K562 (cell line): ENCODE measurements at regions of chr9 and their contacts with region 1.

Region 1: GRCh38 chr9:104780799-104781395 is 17.0 kb downstream of the NIPSNAP3B start:
- DNase-seq: peak in 1 of 4 experiments; percentile 41
- ATAC-seq: peak; percentile 74
- H3K4me3 ChIP-seq: no peak overlapping the region
- H3K27ac ChIP-seq: no peak overlapping the region
- H3K4me1 ChIP-seq: peaks cover 3% of the 10 kb centered on the region in 2 experiments; a peak in 4 of 5 replicates
- H3K27me3 ChIP-seq: peaks cover 3 to 10% of the 10 kb centered on the region in 2 experiments; a peak in 3 of 5 replicates
- CTCF ChIP-seq: peak; percentile 15 to 72 (median 29); a peak in 3 of 6 replicates
- EP300 ChIP-seq: no peak
- POLR2A ChIP-seq: no peak
- RAD21 ChIP-seq: peak; percentile 76 to 82

Region 2: GRCh38 chr9:104682642-104683041 is 98.3 kb before region 1 on chr9:
- CTCF ChIA-PET with region 1: no interaction called
- POLR2A ChIA-PET with region 1: no interaction called
- in situ Hi-C with region 1: no loop called
- intact Hi-C with region 1: no loop called
- DNase-seq: peak; percentile 13 to 64 (median 18)
- ATAC-seq: peak; percentile 85
- H3K4me3 ChIP-seq: no peak overlapping the region
- H3K27ac ChIP-seq: no peak overlapping the region
- H3K4me1 ChIP-seq: no peaks in the 10 kb centered on the region
- H3K27me3 ChIP-seq: no peaks in the 10 kb centered on the region
- CTCF ChIP-seq: peak; percentile 27 to 65 (median 44); a peak in 4 of 6 replicates
- EP300 ChIP-seq: no peak
- POLR2A ChIP-seq: no peak
- RAD21 ChIP-seq: peak; percentile 77 to 86

Region 3: DNA sequence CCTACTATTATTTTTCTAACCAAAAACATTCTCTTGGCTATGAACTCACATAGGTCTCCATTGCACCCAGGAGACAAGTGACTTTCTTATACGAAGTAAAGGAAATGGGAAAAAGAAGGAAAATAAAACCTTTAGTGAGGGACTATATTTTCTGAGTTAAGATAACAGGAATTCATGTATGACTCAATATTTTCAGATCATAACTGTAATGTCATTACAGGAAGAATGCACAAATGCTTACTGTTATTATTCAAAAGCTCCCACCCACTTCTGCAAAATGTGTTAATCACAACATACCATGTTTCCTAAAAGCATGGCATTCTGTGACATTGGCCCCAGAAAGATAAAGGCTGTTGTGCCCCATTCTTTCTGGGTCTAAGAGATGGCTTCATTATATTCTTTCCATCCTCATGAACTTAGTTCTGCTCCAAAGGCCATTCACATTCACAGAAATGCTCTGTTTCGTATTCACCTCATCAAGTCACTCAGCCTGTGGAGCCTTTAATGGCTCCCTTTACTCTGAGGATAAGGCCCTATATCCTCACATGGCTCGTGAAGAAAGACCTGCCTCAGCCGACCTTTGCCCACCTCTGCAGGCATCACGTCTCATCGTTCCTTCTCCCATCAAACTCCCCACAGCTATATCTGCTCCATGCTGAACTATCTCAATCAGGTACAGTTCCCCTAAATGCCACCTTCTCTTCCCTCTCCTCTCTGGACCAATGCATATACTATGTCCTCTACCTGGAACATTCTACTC is 70.1 kb after region 1 on chr9:
- CTCF ChIA-PET with region 1: no interaction called
- POLR2A ChIA-PET with region 1: no interaction called
- in situ Hi-C with region 1: no loop called
- intact Hi-C with region 1: no loop called
- DNase-seq: no peak
- ATAC-seq: no peak
- H3K4me3 ChIP-seq: no peak overlapping the region
- H3K27ac ChIP-seq: no peak overlapping the region
- H3K4me1 ChIP-seq: no peaks in the 10 kb centered on the region
- H3K27me3 ChIP-seq: peaks cover 4 to 14% of the 10 kb centered on the region in 2 experiments; a peak in 3 of 5 replicates
- CTCF ChIP-seq: no peak
- EP300 ChIP-seq: no peak
- POLR2A ChIP-seq: no peak
- RAD21 ChIP-seq: no peak

Region 4: DNA sequence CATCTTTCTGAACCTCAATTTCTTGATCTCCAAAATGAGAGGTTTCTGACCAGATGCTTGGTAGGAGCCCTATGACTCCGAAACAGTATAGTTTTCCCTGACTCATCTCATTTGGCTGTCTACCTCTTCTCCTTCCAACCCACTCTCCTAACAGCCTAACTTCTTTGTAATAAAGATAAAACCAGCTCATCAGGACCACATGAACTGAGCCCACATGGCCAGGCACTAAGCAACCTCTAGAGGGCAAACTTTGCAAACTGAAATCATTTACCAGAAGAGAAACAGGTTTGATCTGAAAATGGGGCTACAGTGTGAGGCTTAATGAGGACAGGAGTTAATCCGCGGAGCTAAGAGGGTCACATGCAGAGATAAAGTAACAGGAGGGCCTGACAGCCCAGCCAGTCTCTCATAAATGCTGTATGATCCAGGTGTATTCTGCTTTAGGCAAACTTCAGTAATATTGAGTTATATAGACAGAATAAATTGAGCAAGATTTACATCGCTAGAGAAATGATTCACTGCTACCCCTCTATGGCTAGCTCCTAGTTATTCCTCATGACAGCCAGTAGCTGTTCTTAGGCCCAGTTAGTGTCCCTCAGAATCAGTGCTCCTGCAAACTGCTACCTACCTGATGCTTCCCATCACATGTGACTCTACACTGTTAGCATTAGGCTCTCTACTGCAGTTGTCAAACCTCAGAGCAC is 82.4 kb after region 1 on chr9:
- CTCF ChIA-PET with region 1: no interaction called
- POLR2A ChIA-PET with region 1: no interaction called
- in situ Hi-C with region 1: no loop called
- intact Hi-C with region 1: loop called (anchors 2 kb)
- DNase-seq: peak; percentile 39 to 70 (median 50)
- ATAC-seq: peak; percentile 96
- H3K4me3 ChIP-seq: no peak overlapping the region
- H3K27ac ChIP-seq: no peak overlapping the region
- H3K4me1 ChIP-seq: peaks cover 0 to under 1% of the 10 kb centered on the region in 2 experiments; a peak in 1 of 5 replicates
- H3K27me3 ChIP-seq: peaks cover 2 to 20% of the 10 kb centered on the region in 2 experiments; a peak in 2 of 5 replicates
- CTCF ChIP-seq: peak; percentile 61 to 82 (median 75)
- EP300 ChIP-seq: no peak
- POLR2A ChIP-seq: no peak
- RAD21 ChIP-seq: peak; percentile 82 to 85

Region 5: GRCh38 chr9:104991144-104991953 is 210.5 kb after region 1 on chr9:
- CTCF ChIA-PET with region 1: no interaction called
- POLR2A ChIA-PET with region 1: no interaction called
- in situ Hi-C with region 1: no loop called
- intact Hi-C with region 1: loop called (anchors 5 kb)
- DNase-seq: peak; percentile 67 to 87 (median 80)
- ATAC-seq: peak; percentile 94
- H3K4me3 ChIP-seq: peak overlapping the region; percentile 48
- H3K27ac ChIP-seq: peak overlapping the region; percentile 68; the same call in 2 of the 3 replicates
- H3K4me1 ChIP-seq: peaks cover 15 to 16% of the 10 kb centered on the region in 2 experiments
- H3K27me3 ChIP-seq: peaks cover 0 to 4% of the 10 kb centered on the region in 2 experiments; a peak in 1 of 5 replicates
- CTCF ChIP-seq: no peak
- EP300 ChIP-seq: no peak
- POLR2A ChIP-seq: no peak
- RAD21 ChIP-seq: no peak

Region 6: DNA sequence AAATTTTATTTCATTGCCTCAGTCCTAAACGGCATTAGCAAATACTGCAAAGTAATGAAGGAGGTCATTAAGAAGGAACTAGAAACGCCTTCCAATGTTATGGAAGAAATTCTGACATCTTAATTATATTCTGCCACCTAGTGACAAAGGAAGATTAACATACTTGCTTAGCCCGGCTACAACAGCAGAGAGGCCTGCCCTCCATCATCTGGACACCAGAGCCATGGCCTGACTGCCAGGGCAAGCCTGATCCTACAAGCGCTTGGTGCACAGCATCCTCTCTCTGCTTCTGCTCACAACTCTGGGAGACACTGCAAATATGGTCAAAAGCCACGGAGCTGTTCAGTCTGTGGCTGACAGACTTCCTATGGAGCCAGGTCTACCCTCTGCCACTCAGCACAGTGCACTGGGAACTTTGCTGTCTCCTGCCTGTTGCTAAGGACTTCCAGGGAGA is 376.3 kb after region 1 on chr9:
- CTCF ChIA-PET with region 1: interaction called, 3 read pairs
- POLR2A ChIA-PET with region 1: interaction called, 3 read pairs
- in situ Hi-C with region 1: no loop called
- intact Hi-C with region 1: loop called (anchors 2 kb)
- DNase-seq: peak in 2 of 4 experiments; percentile 14 to 21
- ATAC-seq: peak; percentile 80
- H3K4me3 ChIP-seq: no peak overlapping the region
- H3K27ac ChIP-seq: no peak overlapping the region
- H3K4me1 ChIP-seq: no peaks in the 10 kb centered on the region
- H3K27me3 ChIP-seq: no peaks in the 10 kb centered on the region
- CTCF ChIP-seq: peak; percentile 26 to 49 (median 48); a peak in 2 of 6 replicates
- EP300 ChIP-seq: no peak
- POLR2A ChIP-seq: no peak
- RAD21 ChIP-seq: peak; percentile 76 to 79

Region 7: GRCh38 chr9:105405514-105406131 is 624.7 kb after region 1 on chr9:
- CTCF ChIA-PET with region 1: no interaction called
- POLR2A ChIA-PET with region 1: no interaction called
- in situ Hi-C with region 1: loop called (anchors 10 kb)
- intact Hi-C with region 1: no loop called
- DNase-seq: no peak
- ATAC-seq: no peak
- H3K4me3 ChIP-seq: no peak overlapping the region
- H3K27ac ChIP-seq: no peak overlapping the region
- H3K4me1 ChIP-seq: no peaks in the 10 kb centered on the region
- H3K27me3 ChIP-seq: peaks cover 10 to 15% of the 10 kb centered on the region in 2 experiments; a peak in 4 of 5 replicates
- CTCF ChIP-seq: no peak
- EP300 ChIP-seq: no peak
- POLR2A ChIP-seq: no peak
- RAD21 ChIP-seq: no peak